Sciatic nerve (tissue), 2 donors: ENCODE measurements at regions of chr10 and their contacts with region 1.

Region 1: GRCh38 chr10:77965294-77965693 is 38.7 kb upstream of the DLG5 start:
- DNase-seq: no peak
- ATAC-seq: no peak

Region 2: GRCh38 chr10:78047314-78047891 is 82.1 kb after region 1 on chr10:
- intact Hi-C with region 1: no loop called
- DNase-seq: peak; percentile 95
- ATAC-seq: peak; percentile 85

Region 3: GRCh38 chr10:78528749-78529204 is 563.5 kb after region 1 on chr10:
- intact Hi-C with region 1: loop called (anchors 5 kb)
- DNase-seq: peak; percentile 27
- ATAC-seq: no peak